ENCODE measurements at regions of chr6 and their contacts with region 1.

Region 1: GRCh38 chr6:130879826-130880225 is 52.6 kb downstream of the SMLR1 start:
- DNase-seq: no peak
- ATAC-seq: no peak

Region 2: GRCh38 chr6:131592935-131593334 is 713.1 kb after region 1 on chr6:
- intact Hi-C with region 1: loop called (anchors 5 kb)
- DNase-seq: no peak
- ATAC-seq: no peak